HepG2 (cell line): ENCODE measurements at regions of chr17 and their contacts with region 1.

Region 1: DNA sequence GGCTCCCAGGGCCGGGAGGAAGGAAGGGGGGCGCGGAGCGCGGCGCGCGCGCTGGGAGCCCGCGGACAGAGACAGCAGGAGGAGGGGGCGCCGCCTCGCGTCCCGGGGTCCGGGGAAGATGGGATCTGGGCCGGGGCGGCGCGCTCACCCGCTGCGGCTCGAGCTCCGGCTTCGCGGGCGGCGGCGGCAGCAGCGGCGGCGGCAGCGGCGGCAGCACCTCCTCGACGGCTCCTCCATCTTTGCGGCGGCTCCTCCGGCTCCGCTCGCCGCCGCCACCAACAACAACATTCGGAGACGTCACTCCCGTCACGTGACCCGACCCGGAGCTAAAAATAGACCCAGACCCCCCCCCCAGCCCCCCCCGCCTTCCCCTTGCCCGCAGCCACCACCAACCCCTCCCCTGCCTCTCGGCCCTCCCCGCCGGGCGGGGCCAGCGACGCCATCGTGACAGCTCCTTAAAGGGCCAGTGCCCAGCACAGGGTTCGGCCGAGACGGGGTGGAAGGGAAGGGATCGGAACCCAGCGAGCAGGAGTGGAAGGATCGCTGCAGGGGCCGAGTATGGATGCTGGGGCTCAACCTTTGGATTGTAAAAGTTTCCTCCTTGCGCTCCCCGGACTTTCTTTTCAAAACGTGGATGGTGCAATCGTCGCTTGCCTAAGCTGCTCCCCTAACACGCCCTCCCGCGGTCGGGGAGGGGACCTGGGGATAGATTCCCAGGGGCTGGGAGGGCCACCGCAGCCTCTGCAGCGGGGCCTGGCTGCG is at the start of gene HDAC5:
- DNase-seq: peak; percentile 86
- ATAC-seq: peak; percentile 81
- H3K4me3 ChIP-seq: peak within 1 kb of the TSS; percentile 80 to 97 (median 84)
- H3K27ac ChIP-seq: peak within 1 kb of the TSS; percentile 81
- H3K4me1 ChIP-seq: peaks cover 52% of the 10 kb centered on the region
- H3K27me3 ChIP-seq: peaks cover 2 to 11% of the 10 kb centered on the region in 2 experiments; a peak in 2 of 5 replicates
- CTCF ChIP-seq: peak; percentile 95
- EP300 ChIP-seq: peak; percentile 32 to 51; a peak in 2 of 4 replicates
- POLR2A ChIP-seq: peak; percentile 59 to 87
- RAD21 ChIP-seq: peak; percentile 89
- total RNA-seq, gene HDAC5: 34.0 and 46.4 TPM in 2 replicates

Region 2: DNA sequence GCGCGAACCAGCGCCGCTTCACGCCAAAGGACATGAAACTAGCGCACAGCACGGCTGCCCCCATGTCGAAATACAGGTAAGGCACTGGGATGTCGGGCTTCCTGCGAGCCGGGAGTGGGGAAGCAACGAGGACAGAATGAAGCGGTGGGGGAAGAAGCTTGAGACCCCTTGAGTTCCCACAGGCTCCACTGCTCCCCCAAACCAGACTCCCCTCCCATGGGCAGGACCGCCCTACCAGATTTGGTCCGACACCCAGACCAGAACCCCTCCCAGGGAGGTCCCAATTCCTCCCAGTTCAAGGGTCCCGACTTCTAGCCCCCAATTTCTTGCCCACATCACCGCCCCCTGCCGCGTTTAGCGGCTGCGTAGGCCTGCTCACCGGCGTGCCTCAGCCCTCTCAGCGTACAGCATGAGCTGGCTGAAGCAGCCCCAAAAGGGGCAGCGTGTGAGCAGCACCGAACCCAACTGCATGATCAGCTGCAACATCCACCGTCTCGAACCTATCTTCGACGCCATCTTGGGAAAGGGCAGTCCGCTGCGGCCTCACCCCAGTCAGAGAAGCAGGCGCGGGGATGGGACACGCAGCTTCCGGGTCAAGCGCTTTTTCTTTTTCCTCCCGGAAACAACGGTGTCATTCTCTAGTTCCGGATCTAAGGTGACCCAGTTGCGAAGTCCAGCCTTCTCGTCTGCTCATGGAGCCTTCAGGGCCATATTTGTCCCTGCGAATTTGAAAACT is 108.9 kb before region 1 on chr17 and contains the start of gene TMEM101:
- CTCF ChIA-PET with region 1: no interaction called
- POLR2A ChIA-PET with region 1: interaction called, 10 read pairs
- in situ Hi-C with region 1: no loop called
- intact Hi-C with region 1: no loop called
- DNase-seq: peak; percentile 92
- ATAC-seq: peak; percentile 91
- H3K4me3 ChIP-seq: peak within 1 kb of the TSS; percentile 92 to 98 (median 93)
- H3K27ac ChIP-seq: peak within 1 kb of the TSS; percentile 88
- H3K4me1 ChIP-seq: peaks cover 40% of the 10 kb centered on the region
- H3K27me3 ChIP-seq: no peaks in the 10 kb centered on the region; a peak in 1 of 5 replicates
- CTCF ChIP-seq: peak; percentile 50
- EP300 ChIP-seq: peak; percentile 45 to 70; a peak in 2 of 4 replicates
- POLR2A ChIP-seq: peak; percentile 84 to 89
- RAD21 ChIP-seq: no peak; the same call in none of the 2 replicates
- total RNA-seq, gene TMEM101: 50.0 and 72.0 TPM in 2 replicates

Region 3: DNA sequence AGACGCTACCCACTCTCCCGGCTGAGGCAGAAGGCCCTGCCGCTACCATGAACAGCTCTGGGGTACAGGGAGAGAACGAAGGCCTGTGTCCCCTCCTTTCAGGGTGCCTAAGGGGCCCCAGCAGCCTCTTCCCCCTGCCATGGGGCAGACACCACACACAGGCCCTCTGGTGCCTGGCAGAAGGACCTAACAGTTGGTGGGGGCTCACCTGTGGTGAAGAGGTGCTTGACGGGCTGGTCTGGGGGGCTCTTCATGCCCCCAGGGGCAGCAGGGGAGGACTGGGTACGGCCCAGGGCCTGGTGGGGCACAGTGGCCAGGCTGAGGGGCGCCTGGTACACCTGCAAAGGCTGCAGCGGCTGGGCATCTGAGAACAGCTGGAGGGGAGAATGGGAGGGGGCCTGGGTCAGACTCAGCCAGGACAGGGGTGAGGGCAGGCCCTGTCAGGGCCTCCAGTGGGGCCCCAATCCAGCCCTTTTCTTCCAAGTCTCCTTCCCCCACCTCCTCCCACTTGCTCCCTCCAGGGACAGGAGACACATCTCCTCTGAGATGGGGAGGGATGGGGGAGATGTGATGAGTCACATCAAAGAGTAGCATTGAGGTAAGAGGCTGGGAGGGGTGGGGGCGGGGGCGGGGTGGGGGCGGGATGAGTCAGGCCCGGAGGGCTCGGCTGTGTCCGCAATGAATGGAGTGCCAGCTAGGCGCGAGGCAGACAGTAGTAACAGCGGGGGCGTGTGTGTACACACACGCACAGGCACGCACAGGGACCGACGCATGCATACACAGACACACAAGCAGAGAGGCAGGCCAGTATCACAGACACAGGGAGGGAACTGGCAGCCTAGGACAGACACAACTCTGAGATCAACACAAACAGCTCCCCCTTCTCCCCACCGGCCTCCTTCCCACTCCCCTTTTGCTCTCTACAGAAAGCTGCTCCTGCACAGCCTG is 36.9 kb before region 1 on chr17:
- CTCF ChIA-PET with region 1: interaction called, 8 read pairs
- POLR2A ChIA-PET with region 1: interaction called, 9 read pairs
- in situ Hi-C with region 1: loop called (anchors 5 kb)
- intact Hi-C with region 1: no loop called
- DNase-seq: peak; percentile 83
- ATAC-seq: peak; percentile 63
- H3K4me3 ChIP-seq: peak overlapping the region in 1 of 3 experiments; percentile 12; a peak in 1 of 6 replicates
- H3K27ac ChIP-seq: peak overlapping the region; percentile 15
- H3K4me1 ChIP-seq: peaks cover 31% of the 10 kb centered on the region
- H3K27me3 ChIP-seq: no peaks in the 10 kb centered on the region
- CTCF ChIP-seq: 0 out of 2 replicates have a peak, but pooled peaks have one; percentile 21
- EP300 ChIP-seq: 0 out of 4 replicates have a peak, but pooled peaks of 1 of the 2 experiments have one; percentile 15
- POLR2A ChIP-seq: peak in 1 of 2 experiments; percentile 13; a peak in 1 of 4 replicates
- RAD21 ChIP-seq: 0 out of 2 replicates have a peak, but pooled peaks have one; percentile 22

Region 4: DNA sequence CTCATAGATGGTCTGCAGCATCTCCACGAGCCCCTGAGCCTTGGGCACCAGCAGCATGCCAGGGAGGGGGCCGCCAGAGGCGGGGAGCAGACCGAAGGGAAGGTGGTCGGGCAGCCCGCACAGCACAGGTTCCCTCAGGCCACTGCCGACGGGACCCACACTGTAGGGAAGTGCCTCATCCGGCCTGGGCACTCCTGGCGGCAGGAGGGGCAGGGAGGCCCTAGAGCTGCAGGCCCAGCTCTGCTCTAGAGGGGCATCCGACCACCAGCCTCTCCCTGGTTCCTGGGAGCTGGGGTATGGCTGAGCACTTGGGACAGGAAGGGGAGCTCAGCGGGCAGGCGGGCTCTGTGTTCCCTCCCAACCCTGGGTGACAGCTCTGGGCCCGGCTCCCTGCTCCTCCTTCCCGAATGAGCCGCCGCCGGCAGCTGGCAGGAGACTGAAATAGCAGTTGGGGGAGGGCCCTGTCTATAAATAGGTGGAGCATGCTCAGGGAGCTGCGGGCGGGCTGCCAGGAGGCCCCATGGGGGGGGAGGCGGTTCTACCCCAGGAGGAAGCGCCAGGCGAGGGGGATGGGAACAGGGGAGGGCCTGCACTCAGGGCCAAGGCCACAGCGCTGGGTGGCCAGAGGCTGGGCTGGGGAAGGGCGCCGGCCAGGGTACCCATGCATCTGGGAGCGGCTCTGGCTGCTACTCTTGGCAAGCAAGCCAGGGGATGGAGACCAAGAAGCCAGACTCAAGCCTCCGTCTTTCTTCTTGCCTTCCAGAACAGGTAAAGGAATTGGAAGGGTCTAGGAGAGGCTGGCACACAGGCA is 12.5 kb before region 1 on chr17:
- CTCF ChIA-PET with region 1: interaction called, 4 read pairs
- POLR2A ChIA-PET with region 1: interaction called, 83 read pairs
- in situ Hi-C with region 1: no loop called
- intact Hi-C with region 1: loop called (anchors 2 kb)
- DNase-seq: peak; percentile 96
- ATAC-seq: peak; percentile 76
- H3K4me3 ChIP-seq: peak overlapping the region; percentile 76 to 86 (median 85)
- H3K27ac ChIP-seq: peak overlapping the region; percentile 88
- H3K4me1 ChIP-seq: peaks cover 97% of the 10 kb centered on the region
- H3K27me3 ChIP-seq: no peaks in the 10 kb centered on the region
- CTCF ChIP-seq: peak; percentile 56
- EP300 ChIP-seq: peak; percentile 93 to 96
- POLR2A ChIP-seq: peak; percentile 92 to 94
- RAD21 ChIP-seq: peak; percentile 78

Region 5: DNA sequence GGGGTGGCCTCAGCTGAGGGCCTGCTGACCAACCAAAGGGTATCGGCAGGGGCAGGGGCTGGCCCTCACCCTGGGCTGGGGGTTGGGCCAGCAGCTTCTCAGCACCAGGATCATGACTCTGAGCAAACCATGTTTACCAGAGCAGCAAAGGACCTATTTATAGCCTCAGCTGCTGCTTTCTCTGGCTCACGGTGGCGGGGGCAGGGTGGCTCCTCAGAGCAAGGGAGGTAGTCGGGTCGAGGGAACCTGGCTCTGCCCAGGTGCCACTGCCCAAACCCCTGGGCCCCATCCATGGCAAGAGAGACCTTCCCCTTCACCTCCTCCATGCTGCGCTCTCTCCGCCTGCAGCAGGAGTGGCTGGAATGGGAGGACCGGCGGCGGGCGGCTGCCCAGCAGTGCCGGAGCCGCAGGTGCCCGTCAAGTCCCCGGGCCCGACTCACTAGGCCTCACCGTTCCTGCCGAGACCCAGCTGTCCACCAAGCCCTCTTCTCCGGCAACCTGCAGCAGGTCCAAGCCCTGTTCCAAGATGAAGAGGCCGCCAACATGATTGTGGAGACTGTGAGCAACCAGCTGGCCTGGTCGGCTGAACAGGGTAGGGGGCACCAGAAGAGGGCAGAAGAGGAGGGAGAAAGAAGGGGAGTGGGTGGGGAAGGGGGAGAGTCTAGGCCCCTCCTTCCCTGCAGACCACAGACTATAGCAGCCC is 47.1 kb after region 1 on chr17 and contains the start of gene ASB16:
- CTCF ChIA-PET with region 1: no interaction called
- POLR2A ChIA-PET with region 1: interaction called, 6 read pairs
- in situ Hi-C with region 1: no loop called
- intact Hi-C with region 1: loop called (anchors 5 kb)
- DNase-seq: no peak
- ATAC-seq: peak; percentile 40
- H3K4me3 ChIP-seq: peak within 1 kb of the TSS; percentile 42 to 70 (median 59); a peak in 5 of 6 replicates
- H3K27ac ChIP-seq: no peak within 1 kb of the TSS
- H3K4me1 ChIP-seq: peaks cover 41% of the 10 kb centered on the region
- H3K27me3 ChIP-seq: no peaks in the 10 kb centered on the region
- CTCF ChIP-seq: peak; percentile 76
- EP300 ChIP-seq: no peak
- POLR2A ChIP-seq: no peak
- RAD21 ChIP-seq: no peak
- total RNA-seq, gene ASB16: 0.07 TPM in 1 of 2 replicates, not detected in the other

Region 6: DNA sequence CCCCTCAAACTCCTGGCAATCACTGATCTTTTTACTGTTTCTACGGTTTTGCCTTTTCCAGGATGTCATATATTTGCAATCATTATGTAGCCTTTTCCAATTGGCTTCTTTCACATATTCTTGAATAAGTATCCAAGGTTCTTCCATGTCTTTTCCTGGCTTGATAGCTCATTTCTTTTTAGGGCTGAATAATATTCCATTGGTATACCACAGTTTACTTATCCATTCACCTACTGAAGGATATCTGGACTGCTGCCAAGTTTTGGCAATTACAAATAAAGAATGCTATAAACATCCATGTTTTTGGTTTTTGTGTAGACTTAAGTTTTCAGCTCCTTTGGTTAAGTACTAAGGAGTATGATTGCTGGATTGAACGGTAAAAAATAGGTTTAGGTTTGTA is 363.6 kb after region 1 on chr17:
- CTCF ChIA-PET with region 1: no interaction called
- POLR2A ChIA-PET with region 1: no interaction called
- in situ Hi-C with region 1: no loop called
- intact Hi-C with region 1: no loop called
- DNase-seq: no peak
- ATAC-seq: no peak
- H3K4me3 ChIP-seq: no peak overlapping the region
- H3K27ac ChIP-seq: no peak overlapping the region
- H3K4me1 ChIP-seq: peaks cover 8% of the 10 kb centered on the region
- H3K27me3 ChIP-seq: no peaks in the 10 kb centered on the region
- CTCF ChIP-seq: no peak
- EP300 ChIP-seq: no peak
- POLR2A ChIP-seq: no peak
- RAD21 ChIP-seq: no peak